Activated naive CD4-positive, alpha-beta T cell treated with anti-CD3 and anti-CD28 coated beads for 36 hours (primary cell): ENCODE measurements at regions of chr20 and their contacts with region 1.

Region 1: DNA sequence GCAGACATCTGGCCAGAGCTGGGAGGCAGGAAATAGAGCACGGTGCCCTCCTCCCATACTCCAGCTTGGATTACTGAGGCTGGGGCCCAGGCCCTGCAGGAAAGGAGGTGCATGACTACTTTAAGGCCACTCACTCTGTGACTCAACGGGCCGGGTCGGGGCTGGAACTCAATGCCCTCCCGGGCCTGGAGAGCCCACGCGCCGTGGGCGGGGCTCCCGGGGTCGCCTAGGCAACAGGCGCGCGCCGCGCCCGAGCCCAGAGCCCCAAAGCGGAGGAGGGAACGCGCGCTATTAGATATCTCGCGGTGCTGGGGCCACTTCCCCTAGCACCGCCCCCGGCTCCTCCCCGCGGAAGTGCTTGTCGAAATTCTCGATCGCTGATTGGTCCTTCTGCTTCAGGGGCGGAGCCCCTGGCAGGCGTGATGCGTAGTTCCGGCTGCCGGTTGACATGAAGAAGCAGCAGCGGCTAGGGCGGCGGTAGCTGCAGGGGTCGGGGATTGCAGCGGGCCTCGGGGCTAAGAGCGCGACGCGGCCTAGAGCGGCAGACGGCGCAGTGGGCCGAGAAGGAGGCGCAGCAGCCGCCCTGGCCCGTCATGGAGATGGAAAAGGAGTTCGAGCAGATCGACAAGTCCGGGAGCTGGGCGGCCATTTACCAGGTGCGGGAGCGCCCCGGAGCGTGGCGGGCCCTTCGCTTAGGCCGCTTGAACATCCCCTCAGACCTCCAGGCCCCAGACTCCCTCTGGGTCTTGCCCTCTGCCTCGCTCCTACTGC is at the start of gene PTPN1:
- DNase-seq: peak; percentile 99
- H3K4me3 Mint-ChIP-seq: peak within 1 kb of the TSS; percentile 100
- H3K27ac Mint-ChIP-seq: peak within 1 kb of the TSS; percentile 93
- H3K4me1 Mint-ChIP-seq: peaks cover 37% of the 10 kb centered on the region
- H3K27me3 Mint-ChIP-seq: no peaks in the 10 kb centered on the region
- total RNA-seq, gene PTPN1: 111 to 119 TPM

Region 2: GRCh38 chr20:50425085-50425484 is 85.0 kb before region 1 on chr20:
- CTCF ChIA-PET with region 1: no interaction called
- intact Hi-C with region 1: no loop called
- DNase-seq: no peak
- H3K4me3 Mint-ChIP-seq: no peak overlapping the region
- H3K27ac Mint-ChIP-seq: no peak overlapping the region
- H3K4me1 Mint-ChIP-seq: no peaks in the 10 kb centered on the region
- H3K27me3 Mint-ChIP-seq: no peaks in the 10 kb centered on the region

Region 3: DNA sequence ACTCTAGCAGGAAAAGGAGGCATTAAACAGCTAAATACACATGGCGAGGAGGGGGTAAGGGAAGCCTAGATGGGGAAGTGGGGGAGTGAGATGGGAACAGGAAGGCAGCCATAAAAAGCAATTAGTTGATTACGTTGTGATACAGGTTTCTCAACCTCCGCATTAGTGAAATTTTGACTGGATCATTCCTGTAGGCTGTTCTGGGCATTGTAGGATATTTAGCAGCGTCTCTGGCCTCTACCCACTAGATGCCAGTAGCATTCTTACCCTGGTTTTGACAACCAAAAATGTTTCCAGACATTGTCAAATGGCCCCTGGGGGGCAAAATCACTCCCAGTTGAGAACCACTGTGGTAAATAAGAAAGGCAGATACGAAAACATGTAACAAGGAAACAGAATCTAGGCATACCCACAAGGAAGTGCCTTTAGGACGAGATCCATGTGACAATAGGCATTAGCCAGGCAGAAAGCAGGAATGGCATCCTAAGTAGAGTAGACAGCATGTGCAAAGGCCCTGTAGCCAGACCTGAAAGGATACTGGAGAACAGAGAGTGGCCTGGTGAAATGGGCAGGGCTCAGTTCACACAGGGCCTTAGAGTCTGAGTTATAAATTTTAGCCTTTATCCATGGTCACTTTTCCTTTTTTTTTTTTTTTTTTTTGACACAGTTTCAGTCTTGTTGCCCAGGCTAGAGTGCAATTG is 25.7 kb before region 1 on chr20:
- CTCF ChIA-PET with region 1: interaction called, 17 read pairs
- intact Hi-C with region 1: no loop called
- DNase-seq: no peak
- H3K4me3 Mint-ChIP-seq: peak overlapping the region; percentile 81
- H3K27ac Mint-ChIP-seq: peak overlapping the region; percentile 90
- H3K4me1 Mint-ChIP-seq: peaks cover 28% of the 10 kb centered on the region
- H3K27me3 Mint-ChIP-seq: no peaks in the 10 kb centered on the region

Region 4: GRCh38 chr20:50546729-50547314 is 36.7 kb after region 1 on chr20:
- CTCF ChIA-PET with region 1: interaction called, 7 read pairs
- intact Hi-C with region 1: loop called (anchors 2 kb)
- DNase-seq: peak; percentile 63
- H3K4me3 Mint-ChIP-seq: peak overlapping the region; percentile 64
- H3K27ac Mint-ChIP-seq: peak overlapping the region; percentile 94
- H3K4me1 Mint-ChIP-seq: peaks cover 70% of the 10 kb centered on the region
- H3K27me3 Mint-ChIP-seq: no peaks in the 10 kb centered on the region

Region 5: GRCh38 chr20:50569864-50570836 is 60.0 kb after region 1 on chr20:
- CTCF ChIA-PET with region 1: interaction called, 51 read pairs
- intact Hi-C with region 1: loop called (anchors 1 kb)
- DNase-seq: peak; percentile 83
- H3K4me3 Mint-ChIP-seq: peak overlapping the region; percentile 23
- H3K27ac Mint-ChIP-seq: peak overlapping the region; percentile 91
- H3K4me1 Mint-ChIP-seq: peaks cover 84% of the 10 kb centered on the region
- H3K27me3 Mint-ChIP-seq: no peaks in the 10 kb centered on the region

Region 6: DNA sequence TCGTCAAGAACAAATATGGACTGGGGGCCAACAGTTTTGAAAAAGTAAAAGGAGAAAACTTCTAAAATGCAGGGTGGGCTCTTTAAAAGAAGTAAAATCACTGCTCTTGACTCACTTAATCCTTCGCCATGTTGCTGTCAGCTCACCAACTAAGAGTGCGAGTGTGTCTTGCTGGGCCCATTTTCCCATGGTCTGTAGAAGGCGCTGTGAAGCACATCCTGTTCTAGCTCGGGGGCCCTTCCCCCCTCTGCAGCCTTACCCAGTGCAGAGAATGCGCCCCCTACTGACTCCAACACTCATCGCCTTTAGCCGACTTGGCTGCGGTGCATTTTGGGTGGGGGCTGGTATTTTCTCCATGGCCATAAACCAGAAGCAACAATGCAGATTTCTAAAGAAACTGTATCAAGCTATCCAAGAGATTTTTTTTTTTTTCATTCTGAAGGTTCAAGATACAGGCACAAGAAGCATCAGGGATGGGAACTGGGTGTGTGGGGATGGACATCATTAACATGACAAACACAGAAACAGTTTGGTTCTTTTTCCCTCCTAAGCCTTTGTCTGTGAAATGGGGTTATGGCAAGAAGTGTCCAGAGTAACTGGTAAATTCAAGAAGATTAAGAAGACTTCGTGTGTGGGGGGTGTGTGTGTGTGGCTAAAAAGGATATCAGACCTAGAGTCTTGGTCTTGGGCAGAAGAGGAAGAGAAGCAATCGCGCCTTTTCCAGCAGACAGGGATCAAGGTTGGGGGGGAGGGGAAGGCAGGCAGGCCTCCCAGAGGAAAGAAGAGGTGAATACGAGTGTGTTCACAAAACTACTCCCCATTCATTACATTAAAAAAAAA is 419.4 kb after region 1 on chr20:
- CTCF ChIA-PET with region 1: no interaction called
- intact Hi-C with region 1: loop called (anchors 5 kb)
- DNase-seq: peak; percentile 99
- H3K4me3 Mint-ChIP-seq: peak overlapping the region; percentile 85
- H3K27ac Mint-ChIP-seq: peak overlapping the region; percentile 96
- H3K4me1 Mint-ChIP-seq: peaks cover 48% of the 10 kb centered on the region
- H3K27me3 Mint-ChIP-seq: no peaks in the 10 kb centered on the region